SK-N-SH (cell line): ENCODE measurements at regions of chr10 and their contacts with region 1.

Region 1: DNA sequence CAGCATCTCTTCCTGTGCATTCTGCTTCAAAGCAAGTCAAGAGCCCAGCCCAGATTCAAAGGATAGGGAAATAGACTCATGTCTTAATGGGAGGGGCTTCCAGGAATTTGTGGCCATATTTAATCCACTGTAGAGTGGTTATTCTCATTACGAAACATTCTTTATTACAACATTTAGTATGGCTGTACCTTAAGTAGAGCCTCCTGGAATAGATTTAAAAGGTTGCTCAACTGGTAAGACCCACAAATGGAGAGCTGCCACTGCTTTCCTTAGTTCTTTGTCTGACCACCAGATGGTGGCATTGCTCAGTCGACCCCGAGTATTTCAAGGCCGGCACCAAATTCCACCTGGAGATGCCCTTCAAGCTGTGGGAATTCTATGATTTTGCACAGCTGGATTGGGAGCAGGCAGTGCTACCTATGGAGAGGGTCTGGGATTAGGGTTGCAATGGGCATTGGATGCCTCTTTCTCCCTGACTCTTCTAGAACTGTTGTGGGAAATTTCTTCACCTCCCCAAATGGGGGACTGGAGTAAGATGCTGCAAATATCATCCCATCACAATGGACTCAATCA is 102.2 kb downstream of the RBM20 start:
- DNase-seq: peak; percentile 71
- H3K4me3 ChIP-seq: no peak overlapping the region
- H3K27ac ChIP-seq: no peak overlapping the region; a peak in 1 of 4 replicates
- H3K4me1 ChIP-seq: peaks cover 9 to 11% of the 10 kb centered on the region in 2 experiments; a peak in 3 of 4 replicates
- H3K27me3 ChIP-seq: no peaks in the 10 kb centered on the region
- CTCF ChIP-seq: peak; percentile 87
- EP300 ChIP-seq: 0 out of 4 replicates have a peak, but pooled peaks of 1 of the 2 experiments have one; percentile 28
- RAD21 ChIP-seq: peak; percentile 98

Region 2: GRCh38 chr10:110756876-110757275 is 10.5 kb after region 1 on chr10:
- CTCF ChIA-PET with region 1: interaction called, 22 read pairs
- POLR2A ChIA-PET with region 1: no interaction called
- DNase-seq: no peak
- H3K4me3 ChIP-seq: no peak overlapping the region
- H3K27ac ChIP-seq: peak overlapping the region in 1 of 2 experiments; percentile 43; a peak in 2 of 4 replicates
- H3K4me1 ChIP-seq: peaks cover 8 to 15% of the 10 kb centered on the region in 2 experiments; a peak in 2 of 4 replicates
- H3K27me3 ChIP-seq: no peaks in the 10 kb centered on the region
- CTCF ChIP-seq: no peak
- EP300 ChIP-seq: no peak
- RAD21 ChIP-seq: no peak

Region 3: DNA sequence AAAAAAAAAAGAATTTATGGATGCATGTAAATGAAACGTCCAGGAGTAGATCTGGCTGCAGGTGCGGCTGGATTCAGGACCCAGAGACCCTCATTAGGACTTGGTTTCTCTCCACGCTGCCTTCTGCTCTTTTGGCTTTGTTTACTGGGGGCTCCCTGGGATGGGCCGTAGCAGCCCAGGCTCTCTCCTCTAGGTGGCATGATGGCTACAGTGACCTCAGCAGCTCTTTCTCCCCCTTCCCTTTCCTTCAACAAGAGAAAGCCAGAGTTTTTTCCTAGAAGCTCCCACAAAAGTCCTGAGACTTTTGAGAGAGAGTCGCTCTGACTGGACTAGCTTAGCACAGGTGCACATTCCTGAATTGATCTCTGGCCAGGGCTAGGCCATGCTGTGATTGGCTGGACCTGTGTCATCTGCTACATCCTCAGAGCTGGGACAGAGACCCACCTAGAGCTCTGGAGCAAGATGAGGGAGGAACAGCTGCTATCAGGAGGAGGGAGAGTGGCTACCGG is 57.5 kb after region 1 on chr10:
- CTCF ChIA-PET with region 1: interaction called, 21 read pairs
- POLR2A ChIA-PET with region 1: no interaction called
- DNase-seq: peak; percentile 72
- H3K4me3 ChIP-seq: no peak overlapping the region
- H3K27ac ChIP-seq: peak overlapping the region in 1 of 2 experiments; percentile 68; a peak in 2 of 4 replicates
- H3K4me1 ChIP-seq: peaks cover 8 to 33% of the 10 kb centered on the region in 2 experiments; a peak in 3 of 4 replicates
- H3K27me3 ChIP-seq: no peaks in the 10 kb centered on the region
- CTCF ChIP-seq: peak; percentile 53
- EP300 ChIP-seq: no peak
- RAD21 ChIP-seq: peak; percentile 80

Region 4: GRCh38 chr10:110883924-110884323 is 137.6 kb after region 1 on chr10:
- CTCF ChIA-PET with region 1: interaction called, 13 read pairs
- POLR2A ChIA-PET with region 1: no interaction called
- DNase-seq: no peak
- H3K4me3 ChIP-seq: no peak overlapping the region
- H3K27ac ChIP-seq: no peak overlapping the region; a peak in 1 of 4 replicates
- H3K4me1 ChIP-seq: no peaks in the 10 kb centered on the region; a peak in 2 of 4 replicates
- H3K27me3 ChIP-seq: no peaks in the 10 kb centered on the region
- CTCF ChIP-seq: no peak
- EP300 ChIP-seq: no peak
- RAD21 ChIP-seq: no peak

Region 5: DNA sequence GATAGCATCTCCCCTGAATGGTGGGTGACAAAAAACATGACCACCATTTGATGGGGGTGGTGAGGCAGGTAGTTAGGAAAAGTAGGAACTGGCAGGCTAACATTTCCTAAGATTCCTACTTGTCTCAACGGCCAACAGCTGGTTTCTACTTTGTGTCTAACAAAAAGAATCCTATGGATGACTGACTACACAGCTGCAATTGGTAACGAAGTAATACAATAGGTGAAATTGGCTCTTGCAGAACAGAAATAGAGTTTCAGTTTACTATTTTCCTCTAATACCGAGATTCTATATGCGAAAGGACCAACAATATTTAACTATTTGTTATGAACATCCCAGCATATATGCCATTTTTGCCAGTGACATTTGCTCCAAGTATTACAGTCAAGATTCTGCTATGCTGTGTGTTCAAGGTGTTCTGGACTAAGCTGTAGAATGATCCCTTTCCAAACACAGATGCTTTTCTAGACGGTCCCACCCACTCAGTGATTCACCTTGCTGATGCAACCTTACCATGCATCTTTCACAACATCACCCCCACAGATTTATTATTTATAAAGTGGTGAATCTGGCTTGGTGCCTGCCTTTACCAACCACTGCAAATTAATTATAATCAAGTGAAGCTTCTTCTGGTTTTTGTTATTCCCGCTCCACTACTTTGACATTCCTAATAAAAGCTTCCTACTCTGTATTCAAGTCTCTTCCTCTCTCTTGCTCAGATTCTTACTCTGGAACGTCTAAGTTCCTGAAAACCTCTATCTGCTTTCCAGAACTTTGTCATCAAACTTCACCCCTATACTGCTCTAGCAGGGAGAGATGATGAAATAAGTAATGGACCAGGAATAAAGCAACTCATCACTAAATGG is 155.8 kb after region 1 on chr10:
- CTCF ChIA-PET with region 1: interaction called, 12 read pairs
- POLR2A ChIA-PET with region 1: interaction called, 3 read pairs
- DNase-seq: no peak
- H3K4me3 ChIP-seq: no peak overlapping the region
- H3K27ac ChIP-seq: no peak overlapping the region; a peak in 1 of 4 replicates
- H3K4me1 ChIP-seq: peaks cover 5 to 9% of the 10 kb centered on the region in 2 experiments; a peak in 3 of 4 replicates
- H3K27me3 ChIP-seq: no peaks in the 10 kb centered on the region
- CTCF ChIP-seq: no peak
- EP300 ChIP-seq: no peak
- RAD21 ChIP-seq: no peak